Transverse colon (tissue), 4 donors: ENCODE measurements at regions of chr3 and their contacts with region 1.

Region 1: GRCh38 chr3:18258492-18258891 is 166.6 kb downstream of the SATB1 start:
- DNase-seq: no peak
- H3K4me3 ChIP-seq: no peak overlapping the region
- H3K27ac ChIP-seq: no peak overlapping the region
- H3K4me1 ChIP-seq: no peaks in the 10 kb centered on the region
- H3K27me3 ChIP-seq: no peaks in the 10 kb centered on the region
- CTCF ChIP-seq: no peak
- EP300 ChIP-seq: no peak
- POLR2A ChIP-seq: no peak

Region 2: GRCh38 chr3:18228060-18228459 is 30.4 kb before region 1 on chr3:
- in situ Hi-C with region 1: no loop called
- intact Hi-C with region 1: loop called (anchors 2 kb)
- DNase-seq: no peak
- H3K4me3 ChIP-seq: no peak overlapping the region
- H3K27ac ChIP-seq: no peak overlapping the region
- H3K4me1 ChIP-seq: no peaks in the 10 kb centered on the region
- H3K27me3 ChIP-seq: no peaks in the 10 kb centered on the region
- CTCF ChIP-seq: no peak
- EP300 ChIP-seq: no peak
- POLR2A ChIP-seq: no peak

Region 3: DNA sequence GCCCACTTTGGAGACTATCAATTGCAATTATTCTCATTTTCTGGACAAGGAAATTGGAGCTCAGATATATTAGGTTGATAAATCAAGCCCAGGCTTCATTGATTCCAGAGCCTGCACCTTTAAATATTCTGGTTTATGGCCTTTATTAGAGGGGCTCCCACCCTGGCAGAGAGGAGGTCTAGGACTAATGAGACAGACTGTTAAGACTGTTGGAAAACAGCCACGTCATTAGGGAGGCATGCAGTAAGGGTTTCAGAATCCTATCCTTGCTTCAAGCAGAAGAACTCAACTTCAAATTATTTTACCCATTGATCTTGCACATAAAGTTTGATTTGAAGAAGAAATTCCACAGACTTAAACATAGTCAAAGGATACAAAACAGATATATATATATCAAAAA is 856.0 kb after region 1 on chr3:
- in situ Hi-C with region 1: no loop called
- intact Hi-C with region 1: no loop called
- DNase-seq: no peak
- H3K4me3 ChIP-seq: no peak overlapping the region
- H3K27ac ChIP-seq: no peak overlapping the region
- H3K4me1 ChIP-seq: no peaks in the 10 kb centered on the region
- H3K27me3 ChIP-seq: no peaks in the 10 kb centered on the region
- CTCF ChIP-seq: no peak
- EP300 ChIP-seq: no peak
- POLR2A ChIP-seq: no peak